PC-9 (cell line): ENCODE measurements at regions of chr11 and their contacts with region 1.

Region 1: GRCh38 chr11:130042093-130042591 is 27.6 kb upstream of the APLP2 start:
- DNase-seq: peak in 1 of 2 experiments; percentile 70
- H3K4me3 ChIP-seq: no peak overlapping the region
- H3K27ac ChIP-seq: no peak overlapping the region
- H3K4me1 ChIP-seq: peaks cover 6% of the 10 kb centered on the region; the same call in 1 of the 2 replicates
- H3K27me3 ChIP-seq: no peaks in the 10 kb centered on the region
- CTCF ChIP-seq: no peak

Region 2: GRCh38 chr11:130608267-130608666 is 566.1 kb after region 1 on chr11:
- CTCF ChIA-PET with region 1: interaction called, 20 read pairs
- POLR2A ChIA-PET with region 1: no interaction called
- intact Hi-C with region 1: no loop called
- DNase-seq: no peak
- H3K4me3 ChIP-seq: no peak overlapping the region
- H3K27ac ChIP-seq: no peak overlapping the region
- H3K4me1 ChIP-seq: 0 out of 2 replicates have a peak, but pooled peaks cover 5% of the 10 kb centered on the region
- H3K27me3 ChIP-seq: no peaks in the 10 kb centered on the region
- CTCF ChIP-seq: no peak